Pancreas (tissue), 10 donors: ENCODE measurements at regions of chr10 and their contacts with region 1.

Region 1: GRCh38 chr10:132359305-132360040 is 27.5 kb downstream of the LRRC27 start:
- DNase-seq: peak in 1 of 6 donors; percentile 40
- ATAC-seq: no peak
- H3K4me3 ChIP-seq: no peak overlapping the region
- H3K27ac ChIP-seq: no peak overlapping the region
- H3K4me1 ChIP-seq: no peaks in the 10 kb centered on the region
- H3K27me3 ChIP-seq: no peaks in the 10 kb centered on the region
- CTCF ChIP-seq: no peak

Region 2: GRCh38 chr10:132223156-132223590 is 136.3 kb before region 1 on chr10:
- intact Hi-C with region 1: loop called (anchors 5 to 10 kb)
- DNase-seq: peak; percentile 60 to 92 (median 80)
- ATAC-seq: peak; percentile 92 to 99 (median 98)
- H3K4me3 ChIP-seq: no peak overlapping the region
- H3K27ac ChIP-seq: no peak overlapping the region
- H3K4me1 ChIP-seq: no peaks in the 10 kb centered on the region
- H3K27me3 ChIP-seq: no peaks in the 10 kb centered on the region
- CTCF ChIP-seq: peak; percentile 64 to 86 (median 84)

Region 3: GRCh38 chr10:132229834-132230556 is 129.5 kb before region 1 on chr10:
- intact Hi-C with region 1: loop called in 2 of 3 experiments (anchors 5 to 10 kb)
- DNase-seq: peak in 2 of 6 donors; percentile 12 to 47
- ATAC-seq: peak in 3 of 4 donors; percentile 55 to 64 (median 63)
- H3K4me3 ChIP-seq: peak overlapping the region in 1 of 4 donors; percentile 17
- H3K27ac ChIP-seq: no peak overlapping the region
- H3K4me1 ChIP-seq: no peaks in the 10 kb centered on the region
- H3K27me3 ChIP-seq: no peaks in the 10 kb centered on the region
- CTCF ChIP-seq: no peak

Region 4: GRCh38 chr10:132407814-132408278 is 48.4 kb after region 1 on chr10:
- intact Hi-C with region 1: no loop called
- DNase-seq: peak; percentile 86 to 96 (median 94)
- ATAC-seq: peak; percentile 69 to 78 (median 74)
- H3K4me3 ChIP-seq: peak overlapping the region in 2 of 4 donors; percentile 29 to 33
- H3K27ac ChIP-seq: peak overlapping the region; percentile 94 to 100 (median 98)
- H3K4me1 ChIP-seq: peaks cover 64 to 76% (median 74%) of the 10 kb centered on the region in 3 donors
- H3K27me3 ChIP-seq: no peaks in the 10 kb centered on the region
- CTCF ChIP-seq: no peak

Region 5: GRCh38 chr10:132593389-132593788 is 233.9 kb after region 1 on chr10:
- intact Hi-C with region 1: no loop called
- DNase-seq: no peak
- ATAC-seq: no peak
- H3K4me3 ChIP-seq: no peak overlapping the region
- H3K27ac ChIP-seq: no peak overlapping the region
- H3K4me1 ChIP-seq: peaks cover 8 to 27% (median 14%) of the 10 kb centered on the region in 3 donors
- H3K27me3 ChIP-seq: no peaks in the 10 kb centered on the region
- CTCF ChIP-seq: no peak